PC-9 (cell line): ENCODE measurements at regions of chr15 and their contacts with region 1.

Region 1: GRCh38 chr15:78365917-78366316 is 25.8 kb downstream of the CRABP1 start:
- DNase-seq: peak in 1 of 2 experiments; percentile 22
- H3K4me3 ChIP-seq: no peak overlapping the region
- H3K27ac ChIP-seq: no peak overlapping the region
- H3K4me1 ChIP-seq: no peaks in the 10 kb centered on the region
- H3K27me3 ChIP-seq: no peaks in the 10 kb centered on the region
- CTCF ChIP-seq: no peak

Region 2: DNA sequence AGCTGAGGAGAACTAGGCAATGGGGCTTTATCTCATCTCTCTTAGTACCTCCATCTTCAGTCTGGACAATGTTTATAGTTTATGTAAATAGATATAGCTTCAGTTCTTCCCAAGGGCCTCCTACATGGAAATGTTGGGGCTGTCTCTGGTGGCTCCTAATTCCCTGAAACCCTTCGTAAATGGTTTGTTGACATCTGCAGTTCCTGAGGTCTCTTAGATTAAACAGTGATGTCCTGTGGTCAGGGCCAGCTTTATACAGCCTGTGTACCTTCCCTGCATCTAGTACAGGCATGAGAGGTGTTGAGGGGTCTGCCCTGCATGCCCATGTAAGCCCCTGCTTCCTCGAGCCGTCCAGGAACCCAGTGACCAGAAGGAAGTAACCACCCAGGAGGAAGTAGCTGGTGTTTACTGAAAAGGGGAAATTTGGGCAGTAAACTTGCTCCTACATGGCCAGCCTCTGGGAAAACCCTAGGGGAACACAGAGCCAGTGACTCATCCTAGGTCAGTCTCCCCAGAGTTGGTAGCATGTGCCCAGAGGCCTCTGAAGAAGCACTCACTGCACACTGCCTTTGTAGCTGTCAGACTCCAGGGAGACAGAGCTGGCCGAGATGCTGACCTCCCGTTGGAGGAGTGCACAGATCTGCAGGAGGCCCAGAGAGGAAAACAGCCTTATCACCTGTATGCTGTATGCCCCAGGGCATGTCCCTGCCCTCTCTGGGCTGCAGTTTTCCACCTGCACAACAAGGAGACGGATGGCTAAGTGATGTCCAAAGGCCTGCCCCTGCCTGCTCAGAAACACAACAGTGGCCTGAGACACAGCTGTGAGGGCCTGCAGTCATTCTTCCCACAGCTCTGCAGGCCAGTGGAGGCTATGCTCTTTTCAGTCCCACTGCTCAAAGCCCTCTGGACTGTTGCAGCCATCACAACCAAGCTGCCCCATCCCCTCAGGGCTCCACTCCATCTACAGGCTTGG is 283.5 kb before region 1 on chr15:
- CTCF ChIA-PET with region 1: interaction called, 13 read pairs
- POLR2A ChIA-PET with region 1: no interaction called
- intact Hi-C with region 1: no loop called
- DNase-seq: no peak
- H3K4me3 ChIP-seq: no peak overlapping the region
- H3K27ac ChIP-seq: no peak overlapping the region
- H3K4me1 ChIP-seq: peaks cover 8% of the 10 kb centered on the region; the same call in 1 of the 2 replicates
- H3K27me3 ChIP-seq: no peaks in the 10 kb centered on the region
- CTCF ChIP-seq: no peak